ENCODE measurements at regions of chr1 and their contacts with region 1.

Region 1: GRCh38 chr1:226186124-226187018 is at the start of gene ACBD3:
- DNase-seq: peak; percentile 88
- H3K27ac ChIP-seq: peak within 1 kb of the TSS; percentile 89
- CTCF ChIP-seq: no peak

Region 2: DNA sequence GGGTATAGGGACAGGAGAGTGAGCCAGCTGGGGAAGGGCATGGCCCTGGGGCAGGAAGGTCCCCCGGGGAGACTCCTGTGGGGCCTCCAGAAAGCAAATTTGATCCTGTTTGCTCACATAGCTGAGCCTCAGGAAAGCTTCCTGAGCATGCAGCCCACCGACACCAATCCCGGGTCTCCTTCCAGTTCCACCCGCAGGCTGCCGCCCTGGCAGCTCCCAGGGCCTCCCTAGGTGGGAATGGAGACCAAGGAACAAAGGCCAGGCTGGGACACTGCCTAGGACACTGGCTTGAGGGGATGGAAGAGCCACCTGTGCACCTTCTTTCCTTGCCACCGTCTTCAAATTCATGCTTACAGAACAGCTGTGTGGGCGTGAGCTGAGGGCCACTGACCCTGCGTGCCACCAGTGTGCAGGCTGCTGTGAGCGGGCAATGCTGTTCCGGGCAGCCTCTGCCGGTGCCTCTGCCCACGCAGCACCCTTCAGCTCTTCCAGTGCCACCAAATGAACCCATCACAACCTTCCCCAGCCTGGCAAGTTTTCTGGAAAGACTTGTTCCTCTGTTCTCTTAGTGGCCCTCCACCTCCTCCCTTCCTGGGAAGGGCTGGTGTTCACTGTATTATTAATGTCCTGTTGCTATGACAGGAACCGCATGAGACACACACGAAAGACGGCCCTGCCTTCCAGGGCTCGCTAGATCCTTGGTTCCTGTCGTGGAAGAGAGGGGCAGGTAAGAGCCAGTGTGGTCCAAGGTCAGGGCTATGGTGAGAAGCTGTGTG is 53.5 kb before region 1 on chr1:
- CTCF ChIA-PET with region 1: interaction called, 6 read pairs
- POLR2A ChIA-PET with region 1: interaction called, 18 read pairs
- DNase-seq: peak; percentile 37
- H3K27ac ChIP-seq: peak overlapping the region; percentile 11
- CTCF ChIP-seq: no peak